ENCODE measurements at regions of chr20 and their contacts with region 1.

Region 1: DNA sequence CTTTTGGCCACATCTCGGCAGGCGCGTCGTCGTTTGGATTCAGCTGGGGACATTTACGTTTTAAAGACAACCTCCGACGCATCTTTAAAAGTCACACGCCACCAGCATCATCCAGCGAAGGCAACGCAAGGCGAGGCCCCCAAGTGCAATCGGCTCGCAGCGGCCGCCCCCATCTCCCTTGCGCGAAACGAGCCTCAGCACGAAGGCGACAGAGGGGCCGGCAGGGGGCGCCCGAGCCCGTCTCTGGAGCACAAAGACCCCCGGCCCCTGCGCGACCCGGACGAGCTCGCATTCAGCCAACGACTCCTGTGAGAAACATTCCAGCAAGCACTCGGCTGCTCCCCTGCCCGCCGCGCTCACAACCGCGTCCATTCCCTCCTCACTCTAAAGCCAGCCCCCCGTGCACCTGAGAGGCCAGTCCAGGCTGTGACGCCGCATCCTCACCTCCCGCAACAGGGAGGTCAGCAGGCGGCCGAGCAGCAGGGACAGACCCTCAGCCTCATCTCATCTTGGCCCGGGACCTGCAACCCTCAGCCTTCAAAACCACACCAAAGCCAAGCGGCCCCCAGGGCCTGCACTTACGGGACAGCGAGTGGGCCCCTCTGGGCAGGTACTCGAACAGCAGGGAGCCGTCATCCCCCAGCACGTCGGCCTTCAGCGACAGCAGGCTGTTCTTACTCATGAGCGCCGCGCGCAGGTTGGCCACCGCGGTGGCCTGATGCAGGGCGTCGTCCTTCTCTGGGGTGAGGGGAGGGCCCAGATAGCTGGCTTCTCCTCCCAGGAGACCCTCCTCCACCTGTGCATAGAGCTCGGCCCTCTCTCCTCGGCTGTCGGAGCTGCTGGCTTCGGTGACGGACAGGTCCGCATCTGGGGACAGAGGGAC is 35.8 kb downstream of the SLC2A4RG start:
- DNase-seq: peak; percentile 91
- ATAC-seq: peak; percentile 84
- H3K4me3 Mint-ChIP-seq: peak overlapping the region; percentile 80
- H3K27ac Mint-ChIP-seq: peak overlapping the region; percentile 93
- H3K4me1 Mint-ChIP-seq: peaks cover 14% of the 10 kb centered on the region
- H3K27me3 Mint-ChIP-seq: peaks cover 4% of the 10 kb centered on the region; the same call in 1 of the 2 replicates
- CTCF ChIP-seq: peak; percentile 95

Region 2: DNA sequence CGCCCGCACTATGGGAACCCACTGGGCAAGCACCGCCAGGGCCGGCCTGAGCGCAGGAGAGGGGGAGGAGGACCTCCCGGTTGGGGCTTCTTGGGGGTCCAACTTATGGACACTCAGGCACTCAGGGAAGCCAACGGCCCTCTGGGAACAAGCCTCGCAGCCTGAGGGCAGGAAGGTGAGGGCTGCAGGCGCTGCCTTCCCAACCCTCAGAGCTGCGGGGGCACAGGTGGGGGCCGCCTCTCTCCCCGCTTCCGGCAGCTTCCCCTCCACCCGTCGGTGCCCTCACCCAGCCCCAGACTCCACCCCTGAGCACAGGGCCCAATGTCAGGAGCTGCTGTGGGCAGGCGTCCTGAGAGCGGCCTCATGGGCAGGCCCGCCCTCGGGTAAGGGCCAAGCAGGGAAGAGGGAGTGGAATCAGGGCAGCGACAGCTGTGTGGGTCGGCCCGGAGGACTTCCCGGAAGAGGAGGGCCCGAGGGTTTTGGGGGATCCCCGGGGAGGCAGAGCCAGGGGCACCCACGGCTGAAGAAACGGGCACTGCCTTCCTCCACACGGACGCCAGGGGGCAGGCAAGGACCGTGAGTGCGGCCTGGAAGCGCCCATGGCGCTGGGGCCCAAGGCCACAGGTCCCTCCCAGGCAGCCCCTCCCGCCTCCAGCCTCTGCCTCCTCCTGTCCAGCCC is 237.7 kb before region 1 on chr20:
- CTCF ChIA-PET with region 1: interaction called, 27 read pairs
- POLR2A ChIA-PET with region 1: no interaction called
- DNase-seq: peak; percentile 87
- ATAC-seq: peak; percentile 84
- H3K4me3 Mint-ChIP-seq: peak overlapping the region; percentile 49
- H3K27ac Mint-ChIP-seq: no peak overlapping the region
- H3K4me1 Mint-ChIP-seq: 0 out of 2 replicates have a peak, but pooled peaks cover 2% of the 10 kb centered on the region
- H3K27me3 Mint-ChIP-seq: no peaks in the 10 kb centered on the region
- CTCF ChIP-seq: peak; percentile 93

Region 3: DNA sequence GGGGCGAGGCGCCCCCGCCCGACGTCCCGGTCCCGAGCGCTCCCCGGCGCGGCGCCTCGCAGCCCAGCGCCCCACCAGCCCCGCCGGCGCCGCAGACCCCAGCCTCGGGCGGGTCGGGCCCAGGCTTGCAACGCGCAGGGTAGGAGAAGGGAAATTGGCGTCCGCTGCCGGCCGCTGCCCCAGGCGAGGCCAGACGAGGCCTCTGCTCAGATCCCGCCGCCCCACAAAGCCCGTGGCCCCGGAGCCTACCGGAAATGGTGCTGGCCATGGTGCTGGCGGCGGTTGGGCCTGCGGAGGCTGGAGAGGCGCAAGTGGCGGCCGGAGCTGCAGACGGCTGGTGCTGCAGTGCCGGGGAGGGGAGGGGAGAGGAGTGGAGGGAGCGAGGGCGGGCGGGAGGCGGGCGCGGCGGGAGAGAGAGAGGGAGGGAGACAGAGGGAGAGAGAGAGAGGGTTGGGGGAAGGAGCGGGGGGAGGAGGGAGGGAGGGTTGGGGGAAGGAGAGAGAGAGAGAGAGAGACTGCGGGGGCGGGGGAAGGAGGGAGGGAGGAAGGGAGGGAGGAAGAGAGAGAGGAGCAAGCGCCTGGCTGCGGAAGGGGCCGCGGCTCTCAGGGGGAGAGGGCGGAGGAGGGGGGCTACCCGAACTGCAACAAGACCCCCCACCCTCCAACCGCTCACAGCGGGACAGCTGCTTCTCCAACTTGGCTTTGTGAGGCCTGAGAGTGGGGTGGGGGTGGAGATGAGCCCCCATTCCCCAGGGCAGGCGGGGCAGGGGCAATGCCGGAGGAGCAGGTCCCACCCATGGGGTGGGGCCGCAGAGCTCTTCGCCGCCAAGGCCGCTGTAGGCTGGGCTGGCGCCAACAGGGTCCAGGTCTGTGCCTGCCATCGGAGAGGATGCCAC is 122.0 kb before region 1 on chr20 and contains the start of gene STMN3:
- CTCF ChIA-PET with region 1: no interaction called
- POLR2A ChIA-PET with region 1: no interaction called
- DNase-seq: peak; percentile 96
- ATAC-seq: peak; percentile 66
- H3K4me3 Mint-ChIP-seq: peak within 1 kb of the TSS; percentile 80
- H3K27ac Mint-ChIP-seq: peak within 1 kb of the TSS; percentile 92
- H3K4me1 Mint-ChIP-seq: peaks cover 18% of the 10 kb centered on the region
- H3K27me3 Mint-ChIP-seq: peaks cover 3% of the 10 kb centered on the region; the same call in 1 of the 2 replicates
- CTCF ChIP-seq: no peak
- total RNA-seq, gene STMN3: 53.0 to 65.6 TPM (median 53.4 TPM) in 3 replicates

Region 4: DNA sequence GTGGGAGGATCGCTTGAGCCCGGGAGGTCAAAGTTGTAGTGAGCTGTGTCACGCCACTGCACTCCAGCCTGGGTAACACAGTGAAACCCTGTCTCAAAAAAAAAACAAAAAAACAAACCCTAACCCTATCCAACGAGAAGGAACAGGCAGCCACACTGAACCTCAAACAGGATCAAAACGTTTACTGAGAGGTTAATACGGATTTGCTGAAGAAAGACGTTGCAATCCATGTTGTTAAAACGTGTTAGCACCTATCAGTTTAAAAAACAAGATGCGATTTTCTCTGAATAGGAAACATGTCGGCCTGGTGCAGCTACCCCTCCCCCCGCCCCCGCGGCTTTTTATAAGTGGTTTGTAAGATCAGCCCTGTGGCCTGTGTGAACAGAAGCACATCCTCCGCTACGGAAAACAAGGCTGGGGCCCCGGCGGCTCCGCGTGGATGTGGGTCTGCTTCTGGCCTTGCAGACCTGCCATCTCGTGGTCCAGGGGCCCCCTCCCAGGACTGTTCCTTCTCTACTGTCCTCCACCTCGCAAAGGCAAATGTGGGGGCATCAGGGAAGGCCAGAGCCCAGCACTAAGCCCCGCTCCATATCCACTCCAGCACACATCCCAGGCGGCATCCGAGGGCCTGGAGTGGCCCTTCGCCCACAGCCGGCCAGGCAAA is 24.4 kb before region 1 on chr20:
- CTCF ChIA-PET with region 1: interaction called, 29 read pairs
- POLR2A ChIA-PET with region 1: interaction called, 3 read pairs
- DNase-seq: no peak
- ATAC-seq: peak; percentile 10
- H3K4me3 Mint-ChIP-seq: no peak overlapping the region
- H3K27ac Mint-ChIP-seq: peak overlapping the region; percentile 79
- H3K4me1 Mint-ChIP-seq: peaks cover 10% of the 10 kb centered on the region
- H3K27me3 Mint-ChIP-seq: no peaks in the 10 kb centered on the region
- CTCF ChIP-seq: no peak

Region 5: DNA sequence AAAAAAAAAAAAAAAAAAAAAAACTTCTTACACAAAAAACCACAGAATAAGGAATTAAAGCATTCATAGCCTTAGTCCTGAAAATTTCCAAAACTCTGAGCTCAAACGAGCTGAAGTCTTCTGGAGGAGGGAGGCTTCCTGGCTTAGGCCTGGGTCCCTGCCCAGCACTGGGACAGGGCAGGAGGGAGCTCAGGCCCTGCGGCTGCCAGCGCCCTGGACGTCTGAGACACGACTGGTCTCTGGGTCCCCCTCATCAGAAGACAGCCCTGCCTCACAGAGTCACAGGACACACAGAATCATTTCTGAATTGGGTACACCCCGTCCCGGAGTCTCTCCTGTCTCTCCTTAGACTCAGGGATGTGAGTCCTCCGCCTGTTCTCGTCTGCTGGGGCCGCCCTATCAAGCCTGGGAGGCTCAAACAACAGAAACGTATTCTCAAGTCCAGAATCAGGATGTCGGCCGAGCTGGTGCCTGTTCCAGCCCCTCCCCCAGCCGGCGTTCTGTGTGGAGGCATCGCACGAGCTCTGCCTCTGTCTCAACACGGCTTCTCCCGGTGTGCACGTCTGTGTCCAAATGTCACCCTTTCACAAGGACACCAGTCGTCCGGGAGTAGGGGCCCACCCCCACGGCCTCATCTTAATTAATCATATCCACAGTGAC is 16.3 kb after region 1 on chr20:
- CTCF ChIA-PET with region 1: interaction called, 54 read pairs
- POLR2A ChIA-PET with region 1: no interaction called
- DNase-seq: no peak
- ATAC-seq: no peak
- H3K4me3 Mint-ChIP-seq: no peak overlapping the region
- H3K27ac Mint-ChIP-seq: peak overlapping the region; percentile 80; the same call in 1 of the 2 replicates
- H3K4me1 Mint-ChIP-seq: peaks cover 7% of the 10 kb centered on the region
- H3K27me3 Mint-ChIP-seq: no peaks in the 10 kb centered on the region
- CTCF ChIP-seq: no peak

Region 6: GRCh38 chr20:63822276-63822696 is 46.9 kb after region 1 on chr20:
- CTCF ChIA-PET with region 1: interaction called, 11 read pairs
- POLR2A ChIA-PET with region 1: no interaction called
- DNase-seq: no peak
- ATAC-seq: no peak
- H3K4me3 Mint-ChIP-seq: no peak overlapping the region
- H3K27ac Mint-ChIP-seq: no peak overlapping the region; the same call in 1 of the 2 replicates
- H3K4me1 Mint-ChIP-seq: peaks cover 14% of the 10 kb centered on the region; the same call in 1 of the 2 replicates
- H3K27me3 Mint-ChIP-seq: no peaks in the 10 kb centered on the region
- CTCF ChIP-seq: no peak

Region 7: GRCh38 chr20:63864847-63865640 is 89.7 kb after region 1 on chr20 and contains the start of gene TPD52L2:
- CTCF ChIA-PET with region 1: interaction called, 68 read pairs
- POLR2A ChIA-PET with region 1: interaction called, 4 read pairs
- DNase-seq: peak; percentile 99
- ATAC-seq: peak; percentile 94
- H3K4me3 Mint-ChIP-seq: peak within 1 kb of the TSS; percentile 94
- H3K27ac Mint-ChIP-seq: peak within 1 kb of the TSS; percentile 87
- H3K4me1 Mint-ChIP-seq: peaks cover 27% of the 10 kb centered on the region
- H3K27me3 Mint-ChIP-seq: no peaks in the 10 kb centered on the region
- CTCF ChIP-seq: no peak
- total RNA-seq, gene TPD52L2: 80.8 to 87.2 TPM (median 85.6 TPM) in 3 replicates

Region 8: GRCh38 chr20:63934271-63935068 is 159.1 kb after region 1 on chr20:
- CTCF ChIA-PET with region 1: interaction called, 11 read pairs
- POLR2A ChIA-PET with region 1: no interaction called
- DNase-seq: peak; percentile 70
- ATAC-seq: peak; percentile 70
- H3K4me3 Mint-ChIP-seq: no peak overlapping the region
- H3K27ac Mint-ChIP-seq: peak overlapping the region; percentile 70; the same call in 1 of the 2 replicates
- H3K4me1 Mint-ChIP-seq: 0 out of 2 replicates have a peak, but pooled peaks cover 2% of the 10 kb centered on the region
- H3K27me3 Mint-ChIP-seq: no peaks in the 10 kb centered on the region
- CTCF ChIP-seq: peak; percentile 38; the same call in 1 of the 2 replicates

Measured in WTC11 (cell line).